Stomach (tissue), 19 donors: ENCODE measurements at regions of chr2 and their contacts with region 1.

Region 1: GRCh38 chr2:42944779-42945415 is 152.5 kb upstream of the HAAO start:
- DNase-seq: no peak
- H3K4me3 ChIP-seq: no peak overlapping the region
- H3K27ac ChIP-seq: no peak overlapping the region
- H3K4me1 ChIP-seq: peaks cover 10 to 39% (median 29%) of the 10 kb centered on the region in 4 donors
- H3K27me3 ChIP-seq: no peaks in the 10 kb centered on the region
- CTCF ChIP-seq: no peak
- EP300 ChIP-seq: no peak
- POLR2A ChIP-seq: no peak

Region 2: GRCh38 chr2:42652086-42652485 is 292.8 kb before region 1 on chr2:
- intact Hi-C with region 1: no loop called
- DNase-seq: peak in 1 of 2 donors; percentile 36
- H3K4me3 ChIP-seq: no peak overlapping the region
- H3K27ac ChIP-seq: no peak overlapping the region
- H3K4me1 ChIP-seq: no peaks in the 10 kb centered on the region
- H3K27me3 ChIP-seq: no peaks in the 10 kb centered on the region
- CTCF ChIP-seq: no peak
- EP300 ChIP-seq: no peak
- POLR2A ChIP-seq: no peak

Region 3: GRCh38 chr2:42859006-42859552 is 85.8 kb before region 1 on chr2:
- intact Hi-C with region 1: loop called (anchors 10 kb)
- DNase-seq: peak; percentile 83 to 89
- H3K4me3 ChIP-seq: no peak overlapping the region
- H3K27ac ChIP-seq: no peak overlapping the region
- H3K4me1 ChIP-seq: peaks cover 0 to 12% (median 5%) of the 10 kb centered on the region in 4 donors
- H3K27me3 ChIP-seq: no peaks in the 10 kb centered on the region
- CTCF ChIP-seq: peak in 6 of 7 experiments; percentile 24 to 96 (median 86)
- EP300 ChIP-seq: no peak
- POLR2A ChIP-seq: no peak

Region 4: GRCh38 chr2:43178602-43179542 is 234.0 kb after region 1 on chr2:
- intact Hi-C with region 1: no loop called
- DNase-seq: peak; percentile 81 to 93
- H3K4me3 ChIP-seq: no peak overlapping the region
- H3K27ac ChIP-seq: peak overlapping the region; percentile 83 to 91 (median 88)
- H3K4me1 ChIP-seq: peaks cover 26 to 63% (median 36%) of the 10 kb centered on the region in 4 donors
- H3K27me3 ChIP-seq: no peaks in the 10 kb centered on the region
- CTCF ChIP-seq: no peak
- EP300 ChIP-seq: no peak
- POLR2A ChIP-seq: no peak